OCI-LY7 (cell line): ENCODE measurements at regions of chr1 and their contacts with region 1.

Region 1: DNA sequence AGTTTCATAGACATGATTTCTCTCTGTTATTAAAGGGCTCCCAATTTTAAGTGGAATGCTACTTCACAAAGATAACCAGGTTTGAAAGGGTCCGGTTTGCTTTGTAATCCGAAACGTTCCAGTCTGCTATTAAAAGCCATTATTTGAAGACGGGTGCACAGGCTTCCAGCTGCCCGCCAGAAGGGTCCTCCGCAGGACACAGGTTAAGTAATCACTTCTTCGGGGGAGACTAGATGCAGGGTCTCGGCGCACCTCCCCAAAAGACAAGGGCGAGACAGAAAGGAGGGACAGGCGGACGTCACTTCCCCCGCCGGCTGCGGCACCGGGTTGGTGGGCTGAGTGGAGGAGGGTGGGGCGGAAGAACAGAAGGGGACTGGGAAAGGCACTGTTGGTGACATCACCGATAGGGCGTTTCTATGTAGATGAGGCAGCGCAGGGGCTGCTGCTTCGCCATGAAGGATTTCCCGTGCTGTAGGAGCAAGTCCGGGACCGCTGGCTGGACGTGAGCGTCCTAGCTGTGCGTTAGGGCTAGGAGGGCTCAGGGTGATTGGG is 8.9 kb downstream of the RNU1-2 start:
- DNase-seq: peak; percentile 99
- H3K4me3 ChIP-seq: peak overlapping the region; percentile 65
- H3K27ac ChIP-seq: peak overlapping the region; percentile 95
- H3K4me1 ChIP-seq: peaks cover 62% of the 10 kb centered on the region
- CTCF ChIP-seq: no peak

Region 2: DNA sequence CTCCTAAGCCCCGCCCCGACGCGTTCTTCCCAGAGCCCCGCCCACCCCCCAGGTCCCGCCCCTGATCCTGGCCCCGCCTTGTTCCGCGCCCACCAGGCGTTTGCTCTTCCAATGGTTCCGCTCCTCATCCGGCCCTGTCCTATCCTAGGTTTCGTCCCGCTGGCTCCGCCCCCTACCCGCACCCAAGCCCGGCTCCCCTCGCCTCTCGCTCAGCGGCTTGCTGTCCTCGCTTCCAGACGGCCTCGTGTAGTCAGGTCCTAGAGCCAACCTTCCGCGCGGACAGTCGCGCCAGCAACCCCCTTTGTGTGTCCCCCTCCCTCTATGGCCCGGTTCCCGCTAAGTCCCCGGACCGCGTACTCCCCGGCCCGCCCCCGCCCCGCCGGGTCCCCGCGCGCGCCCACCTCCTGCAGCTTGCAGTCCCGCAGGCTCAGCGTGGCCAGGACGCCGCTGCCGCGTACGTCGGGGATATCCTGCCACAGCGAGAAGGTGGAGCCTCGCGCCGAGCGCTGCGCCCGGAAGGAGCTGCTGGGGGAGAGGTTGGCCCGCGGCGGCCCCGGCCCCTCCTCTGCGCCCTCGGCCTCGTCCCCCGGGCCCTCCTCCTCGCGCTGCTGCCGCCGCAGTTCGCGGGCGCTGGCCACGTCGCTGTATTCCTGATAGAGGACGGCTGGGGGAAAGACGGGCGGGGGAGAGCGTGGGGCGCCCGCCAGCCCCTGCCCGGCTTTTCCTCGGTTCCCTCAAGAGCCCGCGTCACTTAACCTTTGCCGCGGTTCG is 697.9 kb before region 1 on chr1:
- CTCF ChIA-PET with region 1: no interaction called
- POLR2A ChIA-PET with region 1: no interaction called
- intact Hi-C with region 1: loop called (anchors 5 kb)
- DNase-seq: peak; percentile 95
- H3K4me3 ChIP-seq: peak overlapping the region; percentile 75
- H3K27ac ChIP-seq: peak overlapping the region; percentile 65
- H3K4me1 ChIP-seq: peaks cover 6% of the 10 kb centered on the region
- CTCF ChIP-seq: no peak

Region 3: DNA sequence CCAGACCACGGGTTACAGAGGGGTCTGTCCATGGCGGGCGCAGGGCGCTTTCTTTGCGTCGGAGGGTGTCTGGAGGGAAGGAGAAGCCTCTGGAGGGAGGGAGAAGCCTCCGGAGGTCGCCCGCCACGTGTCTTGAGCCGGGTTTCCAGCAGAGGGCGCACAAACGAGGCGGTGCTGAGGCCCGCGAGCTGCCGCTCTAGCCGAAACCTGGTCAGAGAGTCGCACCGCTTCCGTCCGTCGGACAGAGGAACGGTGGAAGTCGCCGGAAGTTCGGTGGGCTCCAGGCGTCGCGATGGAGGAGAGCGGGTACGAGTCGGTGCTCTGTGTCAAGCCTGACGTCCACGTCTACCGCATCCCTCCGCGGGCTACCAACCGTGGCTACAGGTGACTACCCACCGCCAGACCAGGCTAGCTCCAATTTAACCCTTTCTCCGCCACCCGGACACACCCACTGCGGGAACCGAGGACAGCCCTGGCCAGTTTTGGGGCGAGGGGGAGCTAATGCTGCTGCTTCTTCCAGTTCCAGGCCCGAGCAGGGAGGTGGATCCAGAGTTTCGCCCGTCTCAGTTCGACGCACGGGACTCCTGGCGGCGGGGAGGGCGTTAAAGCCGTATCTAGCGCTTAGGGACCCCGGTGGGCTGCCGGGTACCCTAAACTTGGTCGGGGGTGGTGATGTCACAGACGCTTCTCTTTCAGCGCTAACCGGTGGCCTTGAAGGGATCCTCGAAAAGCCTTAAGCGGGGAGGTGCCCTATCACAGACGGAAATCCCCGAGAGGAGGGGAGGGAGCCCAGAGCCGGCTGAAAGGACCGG is 464.0 kb before region 1 on chr1 and contains the start of gene NECAP2:
- CTCF ChIA-PET with region 1: no interaction called
- POLR2A ChIA-PET with region 1: no interaction called
- intact Hi-C with region 1: loop called (anchors 2 kb)
- DNase-seq: peak; percentile 96
- H3K4me3 ChIP-seq: peak within 1 kb of the TSS; percentile 94
- H3K27ac ChIP-seq: peak within 1 kb of the TSS; percentile 59
- H3K4me1 ChIP-seq: peaks cover 27% of the 10 kb centered on the region
- CTCF ChIP-seq: peak; percentile 81
- total RNA-seq, gene NECAP2: 59.0 and 69.2 TPM in 2 replicates

Region 4: GRCh38 chr1:16498573-16499413 is 405.8 kb before region 1 on chr1:
- CTCF ChIA-PET with region 1: no interaction called
- POLR2A ChIA-PET with region 1: no interaction called
- intact Hi-C with region 1: loop called (anchors 5 kb)
- DNase-seq: peak; percentile 89
- H3K4me3 ChIP-seq: peak overlapping the region; percentile 79
- H3K27ac ChIP-seq: no peak overlapping the region
- H3K4me1 ChIP-seq: peaks cover 11% of the 10 kb centered on the region
- CTCF ChIP-seq: peak; percentile 34; the same call in 1 of the 2 replicates